CD8-positive, alpha-beta memory T cell (primary cell): ENCODE measurements at regions of chr1 and their contacts with region 1.

Region 1: GRCh38 chr1:153545067-153546055 is at the start of gene S100A4:
- DNase-seq: peak; percentile 56 to 90 (median 78)
- H3K4me3 ChIP-seq: peak within 1 kb of the TSS; percentile 88
- H3K4me3 Mint-ChIP-seq: peak within 1 kb of the TSS; percentile 93 to 100 (median 98)
- H3K27ac ChIP-seq: peak within 1 kb of the TSS; percentile 79
- H3K27ac Mint-ChIP-seq: peak within 1 kb of the TSS; percentile 91 to 99 (median 97)
- H3K4me1 ChIP-seq: peaks cover 73% of the 10 kb centered on the region
- H3K4me1 Mint-ChIP-seq: peaks cover 59 to 70% (median 64%) of the 10 kb centered on the region in 3 donors
- H3K27me3 ChIP-seq: no peaks in the 10 kb centered on the region
- H3K27me3 Mint-ChIP-seq: peaks cover 0 to 3% of the 10 kb centered on the region in 2 donors
- total RNA-seq, gene S100A4: 125 to 132 TPM

Region 2: DNA sequence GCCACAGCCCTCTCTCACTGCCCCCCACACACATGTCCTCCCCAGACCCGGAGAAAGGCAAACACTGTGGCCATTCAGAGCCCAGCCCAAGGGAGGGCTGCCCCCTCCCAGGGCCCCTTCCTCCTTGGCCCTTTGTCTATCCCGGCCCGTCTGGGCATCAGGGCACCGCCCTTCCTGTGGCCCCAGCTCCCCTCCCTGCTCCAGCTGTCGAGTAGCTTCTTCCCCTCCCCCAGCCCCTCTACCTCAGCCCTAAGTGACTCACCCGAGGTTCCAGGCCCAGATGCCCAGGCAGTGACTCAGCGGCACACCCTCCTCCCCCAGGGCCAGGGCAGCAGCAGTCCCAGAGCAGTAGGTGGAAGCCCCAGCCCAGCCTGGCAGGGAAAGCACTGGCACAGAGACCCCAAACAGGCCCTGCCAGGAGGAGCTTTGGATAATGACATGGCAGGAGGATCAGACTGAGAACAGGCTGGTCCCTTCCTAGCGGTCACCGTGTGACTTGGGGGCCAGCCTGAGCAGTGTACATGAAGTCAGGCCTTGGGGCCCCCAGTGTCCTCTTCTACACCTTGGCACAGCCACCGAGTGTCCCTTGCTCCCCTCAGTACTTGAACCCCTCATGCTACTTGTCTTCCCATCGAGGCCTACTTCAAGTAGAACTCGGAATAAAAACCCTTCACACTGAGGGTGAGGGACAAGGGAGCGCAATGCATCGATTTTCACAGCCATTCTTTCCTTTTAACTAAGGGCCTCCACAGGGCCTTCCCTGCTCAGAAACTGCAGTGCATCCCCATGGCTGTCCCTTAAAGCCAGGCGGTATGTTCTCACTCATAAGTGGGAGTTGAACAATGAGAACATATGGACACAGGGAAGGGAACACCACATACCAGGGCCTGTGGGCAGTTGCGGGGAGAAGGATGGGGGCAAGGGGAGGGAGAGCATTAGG is 21.3 kb after region 1 on chr1:
- CTCF ChIA-PET with region 1: interaction called, 18 read pairs
- POLR2A ChIA-PET with region 1: interaction called, 5 read pairs
- DNase-seq: peak in 4 of 5 donors; percentile 54 to 89 (median 66)
- H3K4me3 ChIP-seq: no peak overlapping the region
- H3K4me3 Mint-ChIP-seq: peak overlapping the region in 6 of 7 donors; percentile 30 to 63 (median 46)
- H3K27ac ChIP-seq: peak overlapping the region; percentile 43
- H3K27ac Mint-ChIP-seq: peak overlapping the region; percentile 76 to 91 (median 85)
- H3K4me1 ChIP-seq: peaks cover 24% of the 10 kb centered on the region
- H3K4me1 Mint-ChIP-seq: peaks cover 27 to 35% (median 34%) of the 10 kb centered on the region in 3 donors
- H3K27me3 ChIP-seq: no peaks in the 10 kb centered on the region
- H3K27me3 Mint-ChIP-seq: peaks cover 1 to 16% of the 10 kb centered on the region in 2 donors

Region 3: DNA sequence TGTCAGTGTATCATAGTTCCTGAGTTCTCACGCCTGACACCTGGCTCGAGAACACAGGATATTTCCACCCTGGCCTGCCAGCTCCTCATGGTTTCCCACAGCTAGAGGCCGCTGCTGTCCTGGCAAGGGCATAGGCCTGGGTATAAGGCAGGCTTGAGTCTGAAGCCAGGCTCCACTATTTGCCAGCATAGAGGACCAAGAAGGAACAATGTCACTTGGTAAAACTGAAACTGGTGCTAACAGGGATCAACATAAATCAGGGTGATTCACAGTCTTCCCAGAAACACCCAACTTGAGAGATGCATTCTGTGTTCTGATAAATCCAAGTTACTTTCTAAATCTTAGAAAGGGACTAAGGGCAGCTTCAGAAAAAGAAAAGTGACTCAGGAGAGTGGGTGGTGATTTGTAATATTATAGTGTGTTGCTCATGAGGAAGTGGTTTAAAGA is 27.2 kb after region 1 on chr1:
- CTCF ChIA-PET with region 1: interaction called, 18 read pairs
- POLR2A ChIA-PET with region 1: no interaction called
- DNase-seq: peak in 3 of 5 donors; percentile 6 to 59 (median 19)
- H3K4me3 ChIP-seq: no peak overlapping the region
- H3K4me3 Mint-ChIP-seq: no peak overlapping the region
- H3K27ac ChIP-seq: no peak overlapping the region
- H3K27ac Mint-ChIP-seq: peak overlapping the region in 1 of 8 donors; percentile 28
- H3K4me1 ChIP-seq: peaks cover 5% of the 10 kb centered on the region
- H3K4me1 Mint-ChIP-seq: peaks cover 11 to 17% (median 15%) of the 10 kb centered on the region in 3 donors
- H3K27me3 ChIP-seq: no peaks in the 10 kb centered on the region
- H3K27me3 Mint-ChIP-seq: peaks cover 2 to 27% of the 10 kb centered on the region in 2 donors